ENCODE measurements at regions of chr5 and their contacts with region 1.

Region 1: DNA sequence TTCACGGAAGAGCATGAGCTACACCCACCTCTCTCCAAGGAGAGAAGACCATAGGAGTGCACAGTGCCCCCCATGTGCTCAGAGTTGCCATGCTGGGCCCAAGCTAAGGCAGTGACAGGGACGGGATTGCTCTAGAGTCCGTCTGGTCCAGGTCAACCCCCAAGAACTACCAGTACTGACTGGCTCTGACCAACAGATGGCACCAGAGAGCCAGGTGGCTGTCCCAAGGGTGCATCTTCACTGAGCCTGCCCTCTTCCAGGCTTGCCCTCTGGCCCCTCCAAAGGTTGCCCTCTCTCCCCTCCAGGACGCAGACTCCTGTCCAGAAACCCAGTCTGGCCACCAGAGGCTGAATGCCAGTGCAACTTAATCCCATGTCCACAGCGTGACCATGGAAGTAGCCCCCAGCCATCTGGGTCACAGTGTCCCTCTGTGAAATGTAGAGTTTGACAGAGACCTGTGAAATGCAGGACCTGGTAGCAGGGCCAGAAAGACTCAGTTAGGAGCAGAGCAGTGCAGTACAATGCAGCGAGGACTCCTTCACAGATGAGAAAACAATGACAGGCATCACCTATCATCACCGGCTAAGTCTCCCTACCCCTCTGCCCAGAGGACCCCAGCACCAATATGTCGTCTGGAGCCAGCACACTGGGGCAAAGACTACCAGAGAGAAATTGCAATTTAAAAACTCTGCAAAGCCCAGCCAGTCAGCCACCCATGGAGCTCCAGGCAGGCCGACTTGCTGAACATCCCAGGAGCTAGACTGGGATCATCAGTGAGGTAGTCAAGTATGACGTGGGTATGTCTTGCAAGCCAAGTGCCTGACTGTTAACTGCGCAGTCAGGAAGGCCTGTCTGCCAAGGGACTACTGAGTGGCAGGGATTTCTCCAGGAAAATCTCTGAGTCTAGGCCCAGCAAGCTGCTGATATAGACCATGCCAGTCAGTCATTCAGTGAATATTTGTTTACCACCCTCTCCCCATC is 7.7 kb upstream of the SKP1 start:
- DNase-seq: peak; percentile 63 to 73 (median 69)
- ATAC-seq: peak; percentile 76 to 89 (median 86)
- H3K4me3 ChIP-seq: no peak overlapping the region
- H3K27ac ChIP-seq: no peak overlapping the region
- H3K4me1 ChIP-seq: peaks cover 0 to 10% (median 0%) of the 10 kb centered on the region in 12 donors
- H3K27me3 ChIP-seq: no peaks in the 10 kb centered on the region
- CTCF ChIP-seq: peak; percentile 84 to 97 (median 92)
- POLR2A ChIP-seq: no peak

Region 2: DNA sequence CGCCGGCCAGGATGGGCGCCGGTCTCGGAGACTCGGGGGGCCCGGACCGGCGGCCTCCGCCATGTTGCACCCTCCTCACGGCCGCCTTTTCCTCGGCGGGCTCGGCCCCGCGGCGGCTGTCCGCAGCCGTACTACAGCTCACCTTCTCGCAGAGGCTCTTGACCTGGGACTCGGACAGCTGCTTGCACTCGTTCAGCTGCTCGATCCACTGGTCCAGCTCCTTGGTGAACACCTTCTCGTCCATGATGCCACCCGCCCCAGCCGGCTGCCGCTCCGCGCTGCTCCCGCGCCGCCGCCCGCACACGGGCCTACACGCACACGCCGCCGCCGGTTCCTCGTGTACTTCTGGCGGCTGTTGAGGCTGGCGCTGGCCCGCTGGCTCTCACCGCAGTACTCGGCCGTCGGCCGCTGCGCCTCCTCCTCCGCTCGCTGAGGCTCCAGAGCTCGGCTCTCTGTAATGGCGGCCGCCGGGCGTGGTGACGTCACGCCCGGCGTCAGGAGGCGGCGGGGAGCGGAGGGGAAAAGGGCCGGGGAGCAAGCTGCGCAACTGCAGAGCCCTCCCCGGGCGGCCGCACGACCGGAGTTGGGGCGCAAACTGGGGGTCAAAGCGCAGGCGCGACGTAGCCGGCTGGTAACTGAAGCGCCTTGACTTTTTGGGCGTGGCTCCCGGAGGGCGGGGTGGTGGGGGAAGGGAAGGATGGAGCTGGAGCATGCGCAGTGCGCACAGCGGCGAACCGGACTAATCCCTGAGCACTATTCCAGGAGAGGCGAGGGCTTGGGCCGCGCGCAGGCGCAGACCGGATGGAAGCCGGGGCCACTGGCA is 41.4 kb after region 1 on chr5 and contains the start of gene PPP2CA:
- intact Hi-C with region 1: loop called in 6 of 10 experiments (anchors 5 kb)
- DNase-seq: peak; percentile 98 to 100 (median 99)
- ATAC-seq: peak; percentile 92 to 97 (median 96)
- H3K4me3 ChIP-seq: peak within 1 kb of the TSS; percentile 64 to 100 (median 94)
- H3K27ac ChIP-seq: peak within 1 kb of the TSS; percentile 98 to 100 (median 99)
- H3K4me1 ChIP-seq: peaks cover 4 to 69% (median 49%) of the 10 kb centered on the region in 12 donors
- H3K27me3 ChIP-seq: no peaks in the 10 kb centered on the region
- CTCF ChIP-seq: peak in 2 of 12 donors; percentile 7 to 9
- POLR2A ChIP-seq: peak; percentile 54 to 75
- total RNA-seq, gene PPP2CA: 143 to 219 (median 180) TPM

Region 3: GRCh38 chr5:134586866-134587524 is 402.6 kb after region 1 on chr5:
- intact Hi-C with region 1: loop called (anchors 5 to 10 kb)
- DNase-seq: peak; percentile 74 to 93 (median 81)
- ATAC-seq: peak; percentile 77 to 90 (median 86)
- H3K4me3 ChIP-seq: peak overlapping the region in 5 of 12 donors; percentile 10 to 37 (median 17)
- H3K27ac ChIP-seq: no peak overlapping the region
- H3K4me1 ChIP-seq: peaks cover 0 to 26% (median 11%) of the 10 kb centered on the region in 12 donors
- H3K27me3 ChIP-seq: no peaks in the 10 kb centered on the region
- CTCF ChIP-seq: peak; percentile 72 to 89 (median 82)
- POLR2A ChIP-seq: no peak

Measured in heart left ventricle (tissue), 16 donors.